Calu3 (cell line): ENCODE measurements at regions of chr6 and their contacts with region 1.

Region 1: GRCh38 chr6:52337633-52338290 is 24.2 kb upstream of the PAQR8 start:
- DNase-seq: no peak
- H3K4me3 Mint-ChIP-seq: no peak overlapping the region
- H3K27ac Mint-ChIP-seq: peak overlapping the region; percentile 65
- H3K4me1 Mint-ChIP-seq: peaks cover 66% of the 10 kb centered on the region
- H3K27me3 Mint-ChIP-seq: no peaks in the 10 kb centered on the region
- CTCF ChIP-seq: no peak

Region 2: DNA sequence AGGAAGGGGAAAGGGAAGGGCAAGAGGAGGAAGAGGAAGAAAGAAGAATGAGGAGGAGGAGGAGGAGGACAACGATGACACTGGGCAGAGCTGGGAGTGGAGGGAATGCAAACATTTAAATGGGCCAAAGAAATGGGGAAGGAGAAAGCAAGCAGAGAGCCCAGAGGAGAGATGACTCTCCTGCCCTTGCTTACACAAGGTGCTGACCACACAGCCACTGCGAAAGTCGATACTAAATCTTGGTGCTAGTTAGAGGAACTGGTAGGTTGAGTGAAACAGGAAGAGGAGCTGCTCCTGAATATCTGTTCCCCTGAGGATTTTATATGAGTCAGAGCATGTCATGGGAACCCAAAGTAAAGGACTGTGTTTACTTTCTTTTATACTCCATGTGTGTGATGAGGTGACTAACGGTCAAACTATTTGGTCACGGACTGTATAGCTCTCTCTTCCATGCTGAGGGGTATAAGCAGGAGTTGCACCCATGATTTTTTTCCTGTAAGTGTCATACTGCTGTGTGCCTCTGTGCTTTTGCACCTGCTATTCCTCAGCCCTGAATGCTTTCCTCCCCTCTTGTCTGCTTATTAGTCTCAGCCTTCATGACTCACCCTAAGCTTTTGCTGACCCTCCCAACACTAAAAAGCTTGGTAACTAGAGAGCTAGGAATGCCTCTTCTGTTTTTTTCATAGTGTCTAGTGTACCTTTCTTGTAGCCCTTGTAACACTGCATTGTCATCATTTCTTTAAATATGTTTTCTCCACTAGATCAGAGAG is 14.7 kb after region 1 on chr6:
- CTCF ChIA-PET with region 1: interaction called, 12 read pairs
- intact Hi-C with region 1: no loop called
- DNase-seq: peak; percentile 70
- H3K4me3 Mint-ChIP-seq: peak overlapping the region; percentile 15
- H3K27ac Mint-ChIP-seq: peak overlapping the region; percentile 91
- H3K4me1 Mint-ChIP-seq: peaks cover 45% of the 10 kb centered on the region
- H3K27me3 Mint-ChIP-seq: no peaks in the 10 kb centered on the region
- CTCF ChIP-seq: no peak

Region 3: GRCh38 chr6:52361945-52362442 is 24.2 kb after region 1 on chr6 and contains the start of gene PAQR8:
- CTCF ChIA-PET with region 1: interaction called, 6 read pairs
- intact Hi-C with region 1: loop called (anchors 1 kb)
- DNase-seq: peak; percentile 79
- H3K4me3 Mint-ChIP-seq: peak within 1 kb of the TSS; percentile 100
- H3K27ac Mint-ChIP-seq: peak within 1 kb of the TSS; percentile 95
- H3K4me1 Mint-ChIP-seq: peaks cover 34% of the 10 kb centered on the region
- H3K27me3 Mint-ChIP-seq: no peaks in the 10 kb centered on the region
- CTCF ChIP-seq: no peak
- total RNA-seq, gene PAQR8: 16.1 and 16.3 TPM in 2 replicates